H1 (cell line): ENCODE measurements at regions of chr14 and their contacts with region 1.

Region 1: GRCh38 chr14:105019861-105020814 is 745 bp downstream of the CDCA4 start:
- DNase-seq: peak in 1 of 2 experiments; percentile 59
- H3K4me3 ChIP-seq: peak overlapping the region; percentile 77 to 89 (median 84)
- H3K27ac ChIP-seq: peak overlapping the region; percentile 82; the same call in 1 of the 2 replicates
- H3K4me1 ChIP-seq: peaks cover 2 to 13% (median 11%) of the 10 kb centered on the region in 4 experiments; a peak in 6 of 7 replicates
- H3K27me3 ChIP-seq: no peaks in the 10 kb centered on the region
- CTCF ChIP-seq: no peak; a peak in 1 of 4 replicates
- EP300 ChIP-seq: no peak
- POLR2A ChIP-seq: no peak
- RAD21 ChIP-seq: no peak

Region 2: DNA sequence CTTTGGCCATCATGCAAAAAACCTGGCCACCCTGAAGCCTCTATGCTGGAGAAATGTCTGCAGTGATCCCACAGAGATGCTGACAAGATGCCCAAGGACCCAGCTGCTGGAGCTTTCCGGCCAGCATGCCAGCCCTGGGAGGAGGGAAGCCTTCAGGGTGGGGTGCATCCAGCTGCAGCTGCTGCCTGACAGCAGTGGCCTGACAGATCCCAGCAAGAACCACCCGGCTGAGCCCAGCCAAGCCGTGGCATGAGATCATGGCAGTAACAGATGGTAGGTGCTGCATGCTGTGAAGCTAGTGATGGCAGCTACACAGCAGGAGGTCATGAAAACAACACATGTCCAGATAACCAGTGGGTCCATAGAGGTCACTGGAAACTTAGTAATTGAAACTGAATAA is 20.8 kb before region 1 on chr14:
- CTCF ChIA-PET with region 1: interaction called, 4 read pairs
- POLR2A ChIA-PET with region 1: interaction called, 11 read pairs
- DNase-seq: no peak
- H3K4me3 ChIP-seq: no peak overlapping the region
- H3K27ac ChIP-seq: no peak overlapping the region
- H3K4me1 ChIP-seq: 0 out of 7 replicates have a peak, but pooled peaks cover 0 to 2% (median 0%) of the 10 kb centered on the region in 4 experiments
- H3K27me3 ChIP-seq: no peaks in the 10 kb centered on the region
- CTCF ChIP-seq: no peak
- EP300 ChIP-seq: no peak
- POLR2A ChIP-seq: no peak
- RAD21 ChIP-seq: no peak

Region 3: DNA sequence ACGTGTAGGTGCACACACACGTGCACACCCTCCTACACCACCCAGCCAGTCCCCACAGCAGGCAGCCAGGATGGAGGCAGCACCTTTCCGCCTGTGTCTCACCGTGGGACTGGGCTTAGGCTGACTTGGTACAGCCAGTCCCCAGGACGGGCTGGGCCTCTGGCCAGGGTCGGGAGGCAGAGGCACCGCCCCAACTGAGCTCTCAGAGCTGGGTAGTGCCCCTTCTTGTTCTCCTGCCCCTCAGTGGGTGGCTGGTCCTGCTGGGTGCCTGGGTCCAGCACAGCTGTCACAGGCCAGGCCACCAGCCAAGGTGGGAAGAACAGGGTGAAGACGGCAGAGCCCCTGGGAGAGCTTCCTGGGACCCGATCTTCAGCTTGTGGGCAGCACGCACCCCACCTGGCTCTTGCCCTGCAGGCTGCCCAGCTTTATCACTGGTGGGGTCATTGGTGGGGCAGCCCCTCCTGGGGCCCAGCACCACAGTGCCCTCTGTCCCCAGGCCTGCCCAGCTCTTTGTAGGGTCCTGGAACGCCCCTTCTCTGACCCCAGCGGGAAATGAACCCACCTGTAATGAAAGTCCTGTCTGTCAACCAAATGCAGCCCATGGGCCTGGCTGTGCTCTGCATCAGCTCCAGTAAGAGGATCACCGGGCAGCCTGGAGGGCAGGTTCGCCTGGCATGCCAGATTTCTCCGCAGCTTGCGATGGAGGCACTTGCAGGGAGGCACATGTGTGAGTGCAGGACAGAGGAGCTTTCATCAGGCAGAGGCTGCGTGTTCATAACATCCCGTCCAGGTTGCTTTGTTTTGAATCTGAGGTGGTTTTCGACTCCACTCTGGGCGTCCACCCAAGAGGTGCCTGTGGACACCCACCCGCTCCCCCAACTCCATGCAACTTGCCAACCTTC is 14.0 kb before region 1 on chr14:
- CTCF ChIA-PET with region 1: interaction called, 5 read pairs
- POLR2A ChIA-PET with region 1: interaction called, 11 read pairs
- DNase-seq: no peak
- H3K4me3 ChIP-seq: no peak overlapping the region
- H3K27ac ChIP-seq: no peak overlapping the region
- H3K4me1 ChIP-seq: peaks cover 0 to 2% (median 0%) of the 10 kb centered on the region in 4 experiments; a peak in 1 of 7 replicates
- H3K27me3 ChIP-seq: no peaks in the 10 kb centered on the region
- CTCF ChIP-seq: no peak
- EP300 ChIP-seq: no peak
- POLR2A ChIP-seq: no peak
- RAD21 ChIP-seq: no peak

Region 4: DNA sequence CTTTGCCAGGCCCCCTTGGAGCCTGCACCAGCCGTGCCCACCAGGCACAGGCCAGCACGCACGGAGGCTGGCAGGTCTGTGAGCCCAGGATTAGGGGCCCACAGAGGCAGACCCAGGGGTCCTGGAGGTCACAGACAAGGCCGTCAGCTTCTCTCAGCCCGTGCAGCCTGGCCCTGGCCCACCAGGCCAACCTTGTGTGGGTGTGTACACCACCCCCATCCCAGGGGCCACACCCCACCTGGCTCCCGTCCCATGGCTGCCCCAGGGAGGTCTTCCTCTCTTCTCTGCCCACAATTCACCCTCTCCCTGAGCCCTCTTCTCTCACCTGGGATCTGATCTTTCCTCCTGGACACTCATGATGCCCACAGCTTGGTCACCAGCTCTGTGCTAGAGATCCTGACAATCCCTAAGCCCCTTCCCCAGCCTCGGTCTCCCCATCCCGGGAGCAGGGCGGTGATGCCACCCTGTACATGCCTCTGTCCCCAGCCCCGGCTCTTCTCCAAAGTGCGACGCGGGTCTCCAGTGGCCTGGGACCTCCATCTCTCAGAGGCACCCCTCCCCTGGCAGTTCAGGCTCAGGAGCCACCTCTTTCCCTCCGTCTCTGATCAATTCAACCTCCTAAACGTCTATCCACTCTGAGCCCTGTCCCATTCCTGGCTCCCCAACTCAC is 76.2 kb after region 1 on chr14:
- CTCF ChIA-PET with region 1: no interaction called
- POLR2A ChIA-PET with region 1: no interaction called
- DNase-seq: no peak
- H3K4me3 ChIP-seq: no peak overlapping the region
- H3K27ac ChIP-seq: no peak overlapping the region
- H3K4me1 ChIP-seq: peaks cover 0 to 15% (median 9%) of the 10 kb centered on the region in 4 experiments; a peak in 6 of 7 replicates
- H3K27me3 ChIP-seq: peaks cover 0 to 29% (median 16%) of the 10 kb centered on the region in 4 experiments; a peak in 6 of 7 replicates
- CTCF ChIP-seq: no peak
- EP300 ChIP-seq: no peak
- POLR2A ChIP-seq: no peak
- RAD21 ChIP-seq: no peak

Region 5: GRCh38 chr14:105627711-105628110 is 607.6 kb after region 1 on chr14:
- CTCF ChIA-PET with region 1: no interaction called
- POLR2A ChIA-PET with region 1: no interaction called
- DNase-seq: no peak
- H3K4me3 ChIP-seq: no peak overlapping the region
- H3K27ac ChIP-seq: no peak overlapping the region
- H3K4me1 ChIP-seq: no peaks in the 10 kb centered on the region
- H3K27me3 ChIP-seq: no peaks in the 10 kb centered on the region
- CTCF ChIP-seq: no peak
- EP300 ChIP-seq: no peak
- POLR2A ChIP-seq: no peak
- RAD21 ChIP-seq: no peak